ENCODE measurements at regions of chr10 and their contacts with region 1.

Region 1: GRCh38 chr10:12077580-12078180 is 8.9 kb downstream of the DHTKD1 start:
- DNase-seq: no peak
- ATAC-seq: no peak
- H3K4me3 ChIP-seq: no peak overlapping the region
- H3K4me3 Mint-ChIP-seq: no peak overlapping the region
- H3K27ac ChIP-seq: no peak overlapping the region
- H3K27ac Mint-ChIP-seq: no peak overlapping the region
- H3K4me1 ChIP-seq: no peaks in the 10 kb centered on the region
- H3K4me1 Mint-ChIP-seq: peaks cover 3% of the 10 kb centered on the region
- H3K27me3 ChIP-seq: no peaks in the 10 kb centered on the region
- H3K27me3 Mint-ChIP-seq: no peaks in the 10 kb centered on the region
- CTCF ChIP-seq: no peak

Region 2: DNA sequence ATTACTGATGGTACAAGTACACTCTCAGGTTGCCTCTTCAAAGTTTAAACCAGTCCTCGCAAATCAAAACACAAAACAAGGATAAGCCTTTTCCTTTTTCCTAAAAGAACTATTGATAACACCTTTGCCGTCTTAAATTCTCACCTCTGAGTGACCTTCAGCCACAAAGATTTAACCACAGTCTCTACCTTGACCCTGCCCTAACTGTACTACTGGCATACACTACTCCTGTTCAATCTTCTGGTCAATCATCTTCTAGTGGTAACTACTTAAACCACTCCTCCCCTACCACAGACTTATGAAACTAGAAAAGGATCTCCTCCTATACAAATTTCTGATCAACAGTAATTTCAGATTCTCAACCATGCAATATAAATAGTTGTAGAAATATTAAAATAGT is 50.1 kb before region 1 on chr10:
- CTCF ChIA-PET with region 1: no interaction called
- POLR2A ChIA-PET with region 1: no interaction called
- intact Hi-C with region 1: loop called in 1 of 2 experiments (anchors 10 kb)
- DNase-seq: no peak
- ATAC-seq: no peak
- H3K4me3 ChIP-seq: no peak overlapping the region
- H3K4me3 Mint-ChIP-seq: no peak overlapping the region
- H3K27ac ChIP-seq: no peak overlapping the region
- H3K27ac Mint-ChIP-seq: no peak overlapping the region
- H3K4me1 ChIP-seq: peaks cover 10% of the 10 kb centered on the region
- H3K4me1 Mint-ChIP-seq: peaks cover 52% of the 10 kb centered on the region
- H3K27me3 ChIP-seq: no peaks in the 10 kb centered on the region
- H3K27me3 Mint-ChIP-seq: no peaks in the 10 kb centered on the region
- CTCF ChIP-seq: no peak

Measured in CD8-positive, alpha-beta T cell (primary cell).